Endothelial cell of umbilical vein (primary cell): ENCODE measurements at regions of chr12 and their contacts with region 1.

Region 1: GRCh38 chr12:29889737-29890136 is 106.0 kb upstream of the TMTC1 start:
- DNase-seq: peak; percentile 25
- H3K4me3 ChIP-seq: no peak overlapping the region
- H3K27ac ChIP-seq: no peak overlapping the region
- H3K4me1 ChIP-seq: no peaks in the 10 kb centered on the region
- H3K27me3 ChIP-seq: no peaks in the 10 kb centered on the region
- CTCF ChIP-seq: peak; percentile 33 to 39
- POLR2A ChIP-seq: no peak

Region 2: GRCh38 chr12:29831173-29831572 is 58.6 kb before region 1 on chr12:
- CTCF ChIA-PET with region 1: no interaction called
- POLR2A ChIA-PET with region 1: no interaction called
- dilution Hi-C with region 1: no loop called
- intact Hi-C with region 1: no loop called
- DNase-seq: no peak
- H3K4me3 ChIP-seq: no peak overlapping the region
- H3K27ac ChIP-seq: no peak overlapping the region
- H3K4me1 ChIP-seq: no peaks in the 10 kb centered on the region
- H3K27me3 ChIP-seq: no peaks in the 10 kb centered on the region
- CTCF ChIP-seq: no peak
- POLR2A ChIP-seq: no peak

Region 3: GRCh38 chr12:30286345-30286926 is 396.7 kb after region 1 on chr12:
- CTCF ChIA-PET with region 1: no interaction called
- POLR2A ChIA-PET with region 1: no interaction called
- dilution Hi-C with region 1: no loop called
- intact Hi-C with region 1: loop called (anchors 10 kb)
- DNase-seq: peak; percentile 64
- H3K4me3 ChIP-seq: no peak overlapping the region
- H3K27ac ChIP-seq: no peak overlapping the region
- H3K4me1 ChIP-seq: no peaks in the 10 kb centered on the region
- H3K27me3 ChIP-seq: peaks cover 4 to 5% of the 10 kb centered on the region in 2 experiments
- CTCF ChIP-seq: peak; percentile 40 to 48
- POLR2A ChIP-seq: no peak